ENCODE measurements at regions of chr3 and their contacts with region 1.

Region 1: GRCh38 chr3:42012935-42013690 is 51.2 kb upstream of the ULK4 start:
- DNase-seq: peak; percentile 81
- H3K4me3 Mint-ChIP-seq: peak overlapping the region; percentile 82
- H3K27ac Mint-ChIP-seq: peak overlapping the region; percentile 89
- H3K4me1 Mint-ChIP-seq: peaks cover 34% of the 10 kb centered on the region
- H3K27me3 Mint-ChIP-seq: no peaks in the 10 kb centered on the region

Region 2: GRCh38 chr3:41961750-41962679 is 51.1 kb before region 1 on chr3 and contains the start of gene ULK4:
- CTCF ChIA-PET with region 1: interaction called, 3 read pairs
- POLR2A ChIA-PET with region 1: interaction called, 25 read pairs
- DNase-seq: peak; percentile 97
- H3K4me3 Mint-ChIP-seq: peak within 1 kb of the TSS; percentile 91
- H3K27ac Mint-ChIP-seq: peak within 1 kb of the TSS; percentile 89
- H3K4me1 Mint-ChIP-seq: peaks cover 25% of the 10 kb centered on the region
- H3K27me3 Mint-ChIP-seq: no peaks in the 10 kb centered on the region
- total RNA-seq, gene ULK4: 14.1 to 18.2 TPM

Region 3: DNA sequence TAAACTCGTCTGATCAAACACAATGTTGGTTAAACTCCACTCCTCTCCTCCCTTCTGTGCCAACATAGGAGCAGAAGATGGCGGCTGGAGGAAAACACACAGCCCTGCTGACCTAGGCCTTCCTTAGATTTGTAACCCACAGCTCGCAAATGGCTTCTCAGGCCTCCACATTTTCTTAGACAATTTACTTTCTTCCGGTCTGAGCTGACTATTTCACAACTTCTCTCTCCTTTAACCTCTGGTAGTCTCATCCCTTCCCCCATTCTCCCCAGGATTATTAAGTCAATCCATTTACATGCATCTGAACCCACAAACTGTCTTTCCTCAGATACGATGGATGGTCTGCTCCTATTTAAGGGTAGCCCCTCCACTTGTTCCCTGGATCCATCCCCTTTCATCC is 25.5 kb before region 1 on chr3:
- CTCF ChIA-PET with region 1: no interaction called
- POLR2A ChIA-PET with region 1: no interaction called
- DNase-seq: no peak
- H3K4me3 Mint-ChIP-seq: no peak overlapping the region
- H3K27ac Mint-ChIP-seq: no peak overlapping the region
- H3K4me1 Mint-ChIP-seq: no peaks in the 10 kb centered on the region
- H3K27me3 Mint-ChIP-seq: no peaks in the 10 kb centered on the region

Region 4: GRCh38 chr3:42032693-42033349 is 19.7 kb after region 1 on chr3:
- CTCF ChIA-PET with region 1: no interaction called
- POLR2A ChIA-PET with region 1: no interaction called
- DNase-seq: no peak
- H3K4me3 Mint-ChIP-seq: no peak overlapping the region
- H3K27ac Mint-ChIP-seq: no peak overlapping the region
- H3K4me1 Mint-ChIP-seq: no peaks in the 10 kb centered on the region
- H3K27me3 Mint-ChIP-seq: no peaks in the 10 kb centered on the region

Region 5: DNA sequence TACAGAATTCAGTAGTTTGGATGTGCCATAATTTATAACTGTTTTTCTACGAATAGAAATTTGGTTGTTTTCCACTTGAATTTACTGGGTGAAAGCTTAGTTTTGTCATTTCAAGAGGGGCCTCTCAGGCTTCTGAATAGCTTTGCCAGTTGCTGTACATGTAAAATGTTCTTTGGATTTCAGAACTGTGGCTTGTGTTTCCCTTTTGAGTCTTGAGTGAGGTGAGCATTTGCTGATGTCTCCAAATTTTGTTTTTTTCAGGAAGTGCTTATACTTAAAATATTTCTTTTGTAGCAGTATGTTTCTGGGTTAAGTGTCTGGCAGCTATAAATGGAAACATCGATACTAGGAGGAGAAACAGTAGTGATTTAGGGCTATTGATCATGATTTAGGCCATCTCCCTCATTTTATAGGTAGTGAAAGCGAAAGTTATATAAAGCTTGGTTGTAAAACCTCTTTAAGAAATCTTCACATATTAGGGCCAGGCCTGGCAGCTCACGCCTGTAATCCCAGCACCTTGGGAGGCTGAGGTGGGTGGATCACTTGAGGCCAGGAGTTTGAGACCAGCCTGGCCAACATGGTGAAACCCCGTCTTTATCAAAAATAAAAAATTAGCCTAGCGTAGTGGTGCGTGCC is 68.8 kb after region 1 on chr3:
- CTCF ChIA-PET with region 1: no interaction called
- POLR2A ChIA-PET with region 1: interaction called, 25 read pairs
- DNase-seq: no peak
- H3K4me3 Mint-ChIP-seq: peak overlapping the region; percentile 51
- H3K27ac Mint-ChIP-seq: peak overlapping the region; percentile 75
- H3K4me1 Mint-ChIP-seq: peaks cover 61% of the 10 kb centered on the region
- H3K27me3 Mint-ChIP-seq: no peaks in the 10 kb centered on the region

Region 6: GRCh38 chr3:42101048-42101447 is 87.9 kb after region 1 on chr3:
- CTCF ChIA-PET with region 1: interaction called, 15 read pairs
- POLR2A ChIA-PET with region 1: interaction called, 4 read pairs
- DNase-seq: no peak
- H3K4me3 Mint-ChIP-seq: no peak overlapping the region
- H3K27ac Mint-ChIP-seq: no peak overlapping the region
- H3K4me1 Mint-ChIP-seq: no peaks in the 10 kb centered on the region
- H3K27me3 Mint-ChIP-seq: no peaks in the 10 kb centered on the region

Measured in activated CD4-positive, alpha-beta memory T cell treated with anti-CD3 and anti-CD28 coated beads, Interleukin-2, amount 10 ng/mL, durations not matched to agents 7 days and 5 days (primary cell).